ENCODE measurements at regions of chr17 and their contacts with region 1.

Region 1: DNA sequence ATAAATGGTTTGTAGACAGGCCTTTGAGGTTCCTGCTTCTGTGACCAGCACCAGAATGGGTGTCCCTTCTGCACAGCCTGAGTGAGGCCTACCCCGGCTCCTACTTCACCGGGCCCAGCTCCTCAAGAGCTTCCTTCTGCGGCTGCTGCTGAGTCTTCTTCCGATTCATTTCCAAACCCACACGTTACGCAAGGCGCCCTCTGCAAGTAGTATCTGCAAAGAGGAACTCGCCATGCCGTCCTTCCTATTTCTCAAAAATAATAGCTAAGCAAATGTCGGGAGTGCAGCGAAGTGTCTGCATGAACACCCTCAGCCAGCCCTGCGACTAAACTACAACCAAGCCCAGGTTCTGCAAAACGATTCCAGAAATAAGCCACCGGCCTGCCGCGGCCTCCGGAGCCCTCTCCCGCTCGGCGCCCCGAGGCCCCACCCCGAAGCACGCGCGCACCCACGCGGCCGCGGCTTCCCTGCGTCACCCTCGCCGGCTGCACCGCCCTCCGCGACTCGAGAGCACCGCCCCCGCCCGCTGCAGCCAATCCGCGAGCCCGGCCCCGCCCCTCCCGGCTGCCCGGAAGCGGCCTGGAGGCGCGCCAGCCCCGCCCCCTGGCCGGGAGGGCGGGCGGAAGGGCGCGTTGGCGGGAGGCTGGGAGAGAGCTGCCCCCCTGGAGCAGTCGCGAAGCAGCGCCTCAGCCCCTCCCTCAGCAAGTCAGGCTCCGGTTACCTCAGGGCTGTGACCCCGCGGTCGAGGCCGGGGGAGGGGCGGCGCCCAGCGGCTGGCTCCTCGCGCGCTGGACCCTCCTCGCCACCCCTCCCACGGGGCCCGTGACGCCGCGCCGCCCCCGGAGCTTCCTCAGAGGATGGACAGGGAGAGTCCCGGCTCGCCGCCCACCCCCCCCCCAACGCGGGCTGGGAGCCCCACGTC is 8.3 kb downstream of the MNT start:
- DNase-seq: peak; percentile 99
- ATAC-seq: peak; percentile 69
- H3K4me3 Mint-ChIP-seq: peak overlapping the region; percentile 98
- H3K27ac Mint-ChIP-seq: peak overlapping the region; percentile 98
- H3K4me1 Mint-ChIP-seq: peaks cover 50% of the 10 kb centered on the region
- H3K27me3 Mint-ChIP-seq: no peaks in the 10 kb centered on the region
- CTCF ChIP-seq: no peak

Region 2: DNA sequence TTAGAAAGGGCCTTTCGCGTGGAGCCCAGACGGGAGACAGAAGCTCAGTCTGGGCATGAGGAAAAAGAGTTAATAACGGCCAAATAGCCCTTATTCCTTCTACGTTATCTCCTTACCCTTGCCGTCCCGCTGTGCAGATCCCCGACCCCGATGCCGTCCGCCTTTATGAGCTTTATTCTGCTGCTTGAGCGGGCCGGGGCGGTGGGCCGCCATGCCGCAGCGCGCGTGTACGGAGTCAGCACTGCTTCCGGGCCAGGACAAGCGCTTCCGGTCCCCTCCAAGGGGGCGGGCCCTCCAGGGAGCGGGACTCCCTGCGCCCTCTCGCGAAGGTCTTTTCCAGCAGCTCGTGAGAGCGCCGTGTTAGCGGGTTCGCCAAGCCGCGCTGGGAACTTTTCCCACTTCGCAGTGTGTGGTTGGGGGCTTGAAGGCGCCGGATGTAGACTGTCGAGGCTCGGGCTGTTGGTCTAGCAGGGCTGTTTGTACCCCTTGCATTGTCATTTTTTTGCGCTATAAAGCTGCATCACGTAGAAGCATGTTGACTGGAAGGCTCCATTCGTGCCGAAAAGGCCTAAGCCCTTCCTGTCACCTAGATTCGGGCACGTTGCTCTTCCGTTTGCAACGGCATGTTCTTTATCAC is 56.2 kb before region 1 on chr17 and contains the start of gene TSR1:
- CTCF ChIA-PET with region 1: no interaction called
- POLR2A ChIA-PET with region 1: interaction called, 15 read pairs
- intact Hi-C with region 1: loop called (anchors 2 kb)
- DNase-seq: peak; percentile 85
- ATAC-seq: peak; percentile 79
- H3K4me3 Mint-ChIP-seq: peak within 1 kb of the TSS; percentile 99
- H3K27ac Mint-ChIP-seq: peak within 1 kb of the TSS; percentile 96
- H3K4me1 Mint-ChIP-seq: peaks cover 23% of the 10 kb centered on the region
- H3K27me3 Mint-ChIP-seq: no peaks in the 10 kb centered on the region
- CTCF ChIP-seq: no peak
- total RNA-seq, gene TSR1: 46.4 and 48.5 TPM in 2 replicates

Region 3: GRCh38 chr17:2406903-2407790 is 14.6 kb after region 1 on chr17:
- CTCF ChIA-PET with region 1: no interaction called
- POLR2A ChIA-PET with region 1: interaction called, 103 read pairs
- intact Hi-C with region 1: no loop called
- DNase-seq: no peak
- ATAC-seq: no peak
- H3K4me3 Mint-ChIP-seq: no peak overlapping the region
- H3K27ac Mint-ChIP-seq: no peak overlapping the region
- H3K4me1 Mint-ChIP-seq: peaks cover 8% of the 10 kb centered on the region
- H3K27me3 Mint-ChIP-seq: no peaks in the 10 kb centered on the region
- CTCF ChIP-seq: no peak

Region 4: GRCh38 chr17:2416010-2416734 is 23.7 kb after region 1 on chr17:
- CTCF ChIA-PET with region 1: interaction called, 23 read pairs
- POLR2A ChIA-PET with region 1: interaction called, 19 read pairs
- intact Hi-C with region 1: no loop called
- DNase-seq: peak; percentile 84
- ATAC-seq: peak; percentile 83
- H3K4me3 Mint-ChIP-seq: no peak overlapping the region
- H3K27ac Mint-ChIP-seq: no peak overlapping the region
- H3K4me1 Mint-ChIP-seq: no peaks in the 10 kb centered on the region
- H3K27me3 Mint-ChIP-seq: no peaks in the 10 kb centered on the region
- CTCF ChIP-seq: peak; percentile 47

Region 5: GRCh38 chr17:2711601-2712299 is 319.2 kb after region 1 on chr17 and contains the start of gene CLUH:
- CTCF ChIA-PET with region 1: no interaction called
- POLR2A ChIA-PET with region 1: no interaction called
- intact Hi-C with region 1: loop called (anchors 2 kb)
- DNase-seq: peak; percentile 96
- ATAC-seq: peak; percentile 83
- H3K4me3 Mint-ChIP-seq: peak within 1 kb of the TSS; percentile 90
- H3K27ac Mint-ChIP-seq: peak within 1 kb of the TSS; percentile 83
- H3K4me1 Mint-ChIP-seq: peaks cover 37% of the 10 kb centered on the region
- H3K27me3 Mint-ChIP-seq: no peaks in the 10 kb centered on the region
- CTCF ChIP-seq: no peak
- total RNA-seq, gene CLUH: 101 and 115 TPM in 2 replicates

Region 6: DNA sequence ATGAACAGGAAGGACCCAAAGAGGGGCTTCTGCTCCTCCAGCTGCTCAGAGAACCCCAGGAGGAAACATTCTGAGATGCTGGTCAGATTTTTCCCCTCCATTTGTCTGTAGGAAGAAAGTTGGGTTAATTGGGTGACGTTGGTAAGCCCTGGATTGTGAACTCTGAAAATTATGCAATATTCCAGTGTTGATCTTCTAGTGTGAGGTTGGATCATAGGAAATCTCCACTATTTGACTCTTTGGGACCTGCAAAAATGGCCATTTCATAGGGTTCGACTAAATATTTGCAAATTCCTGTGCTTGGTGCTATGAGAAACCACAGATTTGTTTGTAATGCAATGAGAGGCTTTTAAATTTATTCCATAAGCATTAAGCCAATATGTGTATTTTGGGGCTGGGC is 734.9 kb after region 1 on chr17 and contains the start of gene OR1G1:
- CTCF ChIA-PET with region 1: no interaction called
- POLR2A ChIA-PET with region 1: no interaction called
- intact Hi-C with region 1: no loop called
- DNase-seq: no peak
- ATAC-seq: no peak
- H3K4me3 Mint-ChIP-seq: no peak within 1 kb of the TSS
- H3K27ac Mint-ChIP-seq: no peak within 1 kb of the TSS
- H3K4me1 Mint-ChIP-seq: peaks cover 3% of the 10 kb centered on the region
- H3K27me3 Mint-ChIP-seq: peaks cover 48% of the 10 kb centered on the region
- CTCF ChIP-seq: no peak
- total RNA-seq, gene OR1G1: not detected in 2 replicates

Measured in activated B cell treated with CpG ODN at 0.5 μM for 24 hours (primary cell).